ENCODE measurements at regions of chr17 and their contacts with region 1.

Region 1: GRCh38 chr17:76726231-76726775 is at the start of gene JMJD6:
- DNase-seq: peak; percentile 97
- ATAC-seq: peak; percentile 82
- H3K4me3 Mint-ChIP-seq: peak within 1 kb of the TSS; percentile 91
- H3K27ac Mint-ChIP-seq: peak within 1 kb of the TSS; percentile 92
- H3K4me1 Mint-ChIP-seq: peaks cover 56% of the 10 kb centered on the region
- H3K27me3 Mint-ChIP-seq: no peaks in the 10 kb centered on the region
- total RNA-seq, gene JMJD6: 60.6 to 72.8 TPM

Region 2: GRCh38 chr17:76714822-76715495 is 11.3 kb before region 1 on chr17:
- CTCF ChIA-PET with region 1: interaction called, 77 read pairs
- DNase-seq: peak; percentile 86
- ATAC-seq: peak; percentile 2
- H3K4me3 Mint-ChIP-seq: peak overlapping the region; percentile 49
- H3K27ac Mint-ChIP-seq: peak overlapping the region; percentile 94
- H3K4me1 Mint-ChIP-seq: peaks cover 56% of the 10 kb centered on the region
- H3K27me3 Mint-ChIP-seq: no peaks in the 10 kb centered on the region

Region 3: DNA sequence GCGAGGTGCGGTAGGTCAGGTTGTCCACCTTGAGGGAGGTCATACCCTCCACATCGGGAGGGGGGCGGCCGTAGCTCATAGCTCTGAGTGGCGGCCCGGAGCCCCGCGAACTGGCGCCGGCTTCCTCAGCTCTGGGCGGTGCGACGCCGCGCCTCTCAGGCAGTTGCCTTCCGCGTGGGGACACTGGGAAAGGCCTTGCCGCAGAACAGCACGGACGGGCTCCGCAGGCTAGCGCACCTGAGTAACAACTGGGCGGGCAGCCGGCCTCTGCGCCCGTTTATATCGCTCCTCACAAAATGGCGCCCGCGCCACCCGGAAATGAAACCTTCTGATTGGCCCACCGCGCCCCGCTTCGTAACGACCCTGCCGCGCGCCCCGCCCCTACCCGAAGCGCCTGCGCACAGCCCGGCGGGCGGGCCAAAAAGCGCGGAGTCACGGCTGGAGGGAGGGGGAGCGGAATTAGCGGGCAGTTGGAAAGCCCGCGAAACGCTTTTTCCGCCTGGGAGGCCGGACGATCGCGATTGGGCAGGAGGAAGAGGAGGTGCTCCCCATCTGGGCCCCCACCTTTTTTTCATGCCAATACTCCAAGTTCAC is 10.9 kb after region 1 on chr17 and contains the start of gene SRSF2:
- CTCF ChIA-PET with region 1: interaction called, 28 read pairs
- DNase-seq: peak; percentile 99
- ATAC-seq: peak; percentile 74
- H3K4me3 Mint-ChIP-seq: peak within 1 kb of the TSS; percentile 92
- H3K27ac Mint-ChIP-seq: peak within 1 kb of the TSS; percentile 100
- H3K4me1 Mint-ChIP-seq: peaks cover 42% of the 10 kb centered on the region
- H3K27me3 Mint-ChIP-seq: no peaks in the 10 kb centered on the region
- total RNA-seq, gene SRSF2: 443 to 471 TPM

Region 4: GRCh38 chr17:77153472-77153871 is 427.2 kb after region 1 on chr17:
- CTCF ChIA-PET with region 1: no interaction called
- DNase-seq: no peak
- ATAC-seq: no peak
- H3K4me3 Mint-ChIP-seq: no peak overlapping the region
- H3K27ac Mint-ChIP-seq: no peak overlapping the region
- H3K4me1 Mint-ChIP-seq: peaks cover 50% of the 10 kb centered on the region
- H3K27me3 Mint-ChIP-seq: no peaks in the 10 kb centered on the region